MCF 10A (cell line): ENCODE measurements at regions of chr6 and their contacts with region 1.

Region 1: DNA sequence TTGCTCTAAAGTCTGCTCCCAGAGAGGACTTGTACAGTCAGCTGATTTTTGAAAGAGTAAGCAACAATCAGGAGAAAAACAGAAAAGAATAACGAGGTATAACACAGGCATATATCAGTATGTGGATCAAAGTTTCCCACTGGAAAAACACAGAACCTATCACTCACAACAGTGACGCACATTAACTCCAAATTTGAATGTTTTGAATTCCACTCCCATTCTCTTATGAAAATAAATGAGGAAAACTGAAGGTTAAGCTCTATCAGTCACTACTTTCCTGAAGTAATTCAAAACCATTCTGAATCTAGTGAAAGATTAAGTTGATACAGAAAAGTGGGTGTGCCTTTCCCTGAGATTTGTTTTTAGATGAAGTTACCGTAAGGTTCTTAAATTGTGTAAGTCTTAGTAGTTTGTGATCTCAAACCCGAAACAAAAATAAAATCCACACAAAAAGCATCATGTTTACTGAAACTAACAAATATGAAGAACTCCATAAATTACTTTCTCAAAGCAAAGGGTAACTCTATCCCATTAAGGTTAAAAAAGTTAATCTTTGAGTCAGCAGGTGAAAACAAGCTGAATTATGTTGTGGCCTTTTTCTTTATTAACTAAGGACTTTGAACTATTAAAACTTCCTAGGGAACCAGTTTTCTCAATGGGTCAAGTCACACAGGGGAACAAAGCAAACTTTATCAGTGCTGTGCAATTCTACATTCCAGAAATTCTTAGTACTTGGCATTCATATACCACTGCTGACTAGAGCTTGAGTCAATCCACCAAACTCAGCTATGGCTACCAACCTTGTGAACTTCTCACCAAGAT is 115.7 kb downstream of the OGFRL1 start:
- DNase-seq: peak; percentile 54
- H3K4me3 Mint-ChIP-seq: peak overlapping the region; percentile 64
- H3K27ac Mint-ChIP-seq: peak overlapping the region; percentile 75
- H3K4me1 Mint-ChIP-seq: peaks cover 26% of the 10 kb centered on the region
- H3K27me3 Mint-ChIP-seq: no peaks in the 10 kb centered on the region
- CTCF ChIP-seq: no peak

Region 2: DNA sequence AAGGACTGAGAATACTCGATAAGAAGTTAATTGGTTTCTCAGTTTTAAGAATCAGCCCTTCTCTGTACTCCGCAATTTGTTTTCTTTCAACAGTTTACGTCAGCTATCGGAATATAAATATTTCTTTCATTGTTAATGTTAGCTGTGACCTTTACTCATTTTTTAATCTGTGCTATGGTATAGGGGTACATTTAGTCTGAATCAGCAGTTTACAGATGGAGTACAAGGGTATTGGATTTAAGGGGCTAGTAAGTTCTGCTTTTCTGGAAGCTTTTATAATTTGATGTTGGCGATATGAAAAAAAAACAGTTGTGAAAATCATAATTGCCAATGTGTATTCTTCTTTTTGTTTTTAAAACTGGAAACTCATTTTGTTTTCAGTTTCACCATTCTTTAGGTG is 968.0 kb before region 1 on chr6:
- CTCF ChIA-PET with region 1: no interaction called
- POLR2A ChIA-PET with region 1: no interaction called
- intact Hi-C with region 1: no loop called
- DNase-seq: no peak
- H3K4me3 Mint-ChIP-seq: no peak overlapping the region
- H3K27ac Mint-ChIP-seq: no peak overlapping the region
- H3K4me1 Mint-ChIP-seq: no peaks in the 10 kb centered on the region
- H3K27me3 Mint-ChIP-seq: no peaks in the 10 kb centered on the region
- CTCF ChIP-seq: no peak

Region 3: DNA sequence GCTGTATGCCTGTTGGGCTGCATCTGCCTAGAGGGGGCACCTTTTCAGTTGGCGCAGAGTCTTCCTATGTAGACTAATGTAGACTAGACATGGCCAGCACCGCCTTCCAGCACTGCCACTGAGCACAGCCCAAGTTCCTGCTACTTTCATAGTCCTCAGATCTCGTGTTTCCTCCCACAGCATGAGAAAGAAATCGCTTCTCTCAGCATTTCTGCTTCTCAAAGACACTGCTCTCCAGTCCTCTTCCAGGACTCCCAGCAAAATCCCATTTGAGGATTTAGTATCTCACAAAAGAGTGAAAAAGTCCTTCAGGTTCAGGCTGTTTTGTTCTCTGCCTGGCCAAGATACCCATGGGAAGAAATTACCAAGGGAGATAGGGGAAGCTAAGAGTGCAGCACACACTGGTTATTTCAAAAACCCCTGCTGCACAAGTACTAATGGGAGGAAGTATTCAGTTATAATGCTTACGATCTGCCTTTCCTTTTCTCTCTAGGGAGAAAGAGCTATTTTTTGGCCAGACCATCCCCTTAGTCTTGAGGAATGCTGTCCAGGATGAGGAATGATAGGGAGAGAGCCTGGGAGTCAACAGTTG is 80.1 kb before region 1 on chr6:
- CTCF ChIA-PET with region 1: no interaction called
- POLR2A ChIA-PET with region 1: no interaction called
- intact Hi-C with region 1: no loop called
- DNase-seq: no peak
- H3K4me3 Mint-ChIP-seq: no peak overlapping the region
- H3K27ac Mint-ChIP-seq: no peak overlapping the region
- H3K4me1 Mint-ChIP-seq: no peaks in the 10 kb centered on the region
- H3K27me3 Mint-ChIP-seq: no peaks in the 10 kb centered on the region
- CTCF ChIP-seq: no peak

Region 4: GRCh38 chr6:71393981-71394432 is 10.3 kb before region 1 on chr6:
- CTCF ChIA-PET with region 1: interaction called, 4 read pairs
- POLR2A ChIA-PET with region 1: interaction called, 33 read pairs
- intact Hi-C with region 1: no loop called
- DNase-seq: peak; percentile 59
- H3K4me3 Mint-ChIP-seq: peak overlapping the region; percentile 19
- H3K27ac Mint-ChIP-seq: peak overlapping the region; percentile 31
- H3K4me1 Mint-ChIP-seq: peaks cover 39% of the 10 kb centered on the region
- H3K27me3 Mint-ChIP-seq: no peaks in the 10 kb centered on the region
- CTCF ChIP-seq: no peak